Activated T-helper 2 cell treated with anti-CD3 and anti-CD28 coated beads, Interferon-gamma antibody, Interleukin-2, Interleukin-4, amounts not matched to agents 10 μg/mL and 5 μg/mL and 100 μg/mL, durations not matched to agents 14 hours and 24 hours and 36 hours (primary cell): ENCODE measurements at regions of chr2 and their contacts with region 1.

Region 1: GRCh38 chr2:130372055-130372832 is 16.4 kb downstream of the PTPN18 start:
- DNase-seq: peak; percentile 69
- H3K4me3 Mint-ChIP-seq: peak overlapping the region; percentile 92
- H3K27ac Mint-ChIP-seq: peak overlapping the region; percentile 89
- H3K4me1 Mint-ChIP-seq: peaks cover 51% of the 10 kb centered on the region
- H3K27me3 Mint-ChIP-seq: peaks cover 1% of the 10 kb centered on the region

Region 2: GRCh38 chr2:130252880-130253645 is 119.2 kb before region 1 on chr2:
- intact Hi-C with region 1: no loop called
- DNase-seq: no peak
- H3K4me3 Mint-ChIP-seq: no peak overlapping the region
- H3K27ac Mint-ChIP-seq: no peak overlapping the region
- H3K4me1 Mint-ChIP-seq: no peaks in the 10 kb centered on the region
- H3K27me3 Mint-ChIP-seq: peaks cover 26% of the 10 kb centered on the region

Region 3: DNA sequence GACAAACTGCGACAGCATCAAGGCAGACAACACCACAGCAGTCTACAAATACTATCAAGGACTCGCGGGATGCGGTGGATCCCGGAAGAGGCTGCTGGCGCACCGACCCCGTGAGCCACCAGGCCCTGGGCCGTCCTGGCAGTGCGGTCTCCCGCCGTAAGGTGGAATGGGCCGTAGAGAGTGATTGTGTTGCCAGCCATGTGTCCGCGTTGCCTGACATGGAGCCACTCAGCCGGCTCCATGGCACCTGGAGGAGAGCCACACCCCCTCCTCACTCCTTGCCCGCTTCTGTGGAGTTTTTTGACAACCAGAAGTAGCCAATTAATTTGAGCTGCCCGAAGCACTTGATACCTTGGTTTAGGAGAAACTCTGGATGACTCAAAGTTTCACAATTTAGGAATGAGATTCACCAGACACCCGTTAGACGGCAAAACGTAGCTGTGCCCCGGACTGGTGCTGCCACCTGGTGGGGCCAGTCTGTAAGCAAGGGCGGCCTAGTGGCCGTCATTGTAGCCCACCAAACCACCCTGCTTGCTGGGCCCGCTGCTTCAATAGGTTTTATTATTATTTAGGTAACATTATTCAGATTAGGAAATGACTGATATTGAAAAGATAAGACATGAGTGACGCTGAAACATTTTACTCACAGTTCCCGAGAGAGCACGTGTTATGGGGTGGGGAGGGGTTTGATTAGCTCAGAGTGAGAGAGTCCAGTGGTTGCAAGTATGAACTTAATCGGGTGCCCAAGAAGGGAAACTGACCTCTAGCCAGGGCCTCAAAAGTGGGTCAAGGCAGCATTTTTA is 39.8 kb before region 1 on chr2:
- intact Hi-C with region 1: no loop called
- DNase-seq: peak; percentile 45
- H3K4me3 Mint-ChIP-seq: no peak overlapping the region
- H3K27ac Mint-ChIP-seq: no peak overlapping the region
- H3K4me1 Mint-ChIP-seq: peaks cover 5% of the 10 kb centered on the region
- H3K27me3 Mint-ChIP-seq: peaks cover 36% of the 10 kb centered on the region

Region 4: GRCh38 chr2:130355578-130356431 is 16.4 kb before region 1 on chr2 and contains the start of gene PTPN18:
- intact Hi-C with region 1: loop called (anchors 2 kb)
- DNase-seq: peak; percentile 55
- H3K4me3 Mint-ChIP-seq: peak within 1 kb of the TSS; percentile 81
- H3K27ac Mint-ChIP-seq: no peak within 1 kb of the TSS
- H3K4me1 Mint-ChIP-seq: peaks cover 13% of the 10 kb centered on the region
- H3K27me3 Mint-ChIP-seq: peaks cover 2% of the 10 kb centered on the region
- total RNA-seq, gene PTPN18: 72.6 and 72.9 TPM in 2 replicates

Region 5: DNA sequence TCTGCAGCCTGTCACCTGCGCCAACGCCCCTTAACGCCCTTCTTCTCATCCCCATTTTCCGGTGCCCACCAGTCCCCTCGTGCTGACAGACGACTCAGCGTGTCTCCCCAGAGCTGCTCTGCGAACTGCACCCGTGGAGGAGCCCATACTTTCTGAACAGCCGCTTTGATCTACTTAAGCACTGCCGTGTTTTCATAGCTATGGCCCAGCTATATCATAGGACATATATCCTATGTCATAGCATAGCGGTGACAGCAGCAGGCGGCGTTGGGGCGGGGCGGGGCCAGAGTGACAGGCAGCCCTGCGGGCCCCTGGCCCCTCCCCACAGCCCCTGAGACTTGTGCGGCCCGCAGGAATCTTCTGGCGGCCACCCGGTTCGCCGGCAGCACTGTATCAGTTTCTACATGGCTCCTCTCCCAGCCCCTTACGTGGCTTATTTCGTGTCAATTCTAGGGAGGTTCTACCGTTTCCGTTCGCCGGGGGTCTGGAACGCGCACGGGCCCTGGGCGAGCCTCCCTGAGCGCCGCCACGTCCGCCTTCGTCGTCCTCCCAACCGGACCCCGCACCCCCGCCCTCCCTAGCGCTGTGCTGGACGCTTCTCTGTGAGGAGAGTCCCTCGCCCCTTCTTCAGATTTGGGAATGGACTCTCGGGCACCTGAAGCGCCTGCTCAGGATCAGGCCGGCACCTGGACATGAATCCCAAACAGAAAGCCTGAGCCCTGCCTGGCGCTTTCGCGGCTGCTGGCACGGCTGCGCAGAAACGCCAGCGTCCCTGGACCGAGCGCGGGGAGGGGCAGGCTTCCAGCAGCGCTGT is 19.0 kb after region 1 on chr2:
- intact Hi-C with region 1: loop called (anchors 2 kb)
- DNase-seq: peak; percentile 59
- H3K4me3 Mint-ChIP-seq: peak overlapping the region; percentile 83
- H3K27ac Mint-ChIP-seq: peak overlapping the region; percentile 86
- H3K4me1 Mint-ChIP-seq: peaks cover 11% of the 10 kb centered on the region
- H3K27me3 Mint-ChIP-seq: peaks cover 5% of the 10 kb centered on the region

Region 6: DNA sequence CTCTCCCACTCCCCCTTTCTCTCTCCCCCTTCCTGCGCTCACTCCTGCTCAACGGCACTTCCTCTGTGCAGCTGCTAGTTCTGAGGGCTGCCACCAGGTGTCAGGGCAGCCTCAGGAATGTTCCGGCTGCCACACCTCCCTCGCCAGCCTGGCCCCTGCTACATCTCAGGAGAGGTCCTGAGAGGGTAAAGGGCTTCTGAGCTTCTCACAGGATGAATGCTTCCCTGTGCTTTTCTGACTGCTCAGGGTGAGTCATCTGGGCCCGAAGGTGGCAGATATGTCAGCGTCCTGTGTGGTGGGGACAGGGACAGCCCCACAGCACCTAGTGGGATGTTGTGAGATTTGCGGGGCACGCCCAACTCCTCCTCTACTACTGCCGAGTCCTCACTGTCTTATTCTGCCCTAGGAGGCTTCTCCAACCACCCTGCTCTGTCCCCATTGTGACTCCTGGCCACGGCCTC is 781.9 kb after region 1 on chr2:
- intact Hi-C with region 1: no loop called
- DNase-seq: peak; percentile 50
- H3K4me3 Mint-ChIP-seq: no peak overlapping the region
- H3K27ac Mint-ChIP-seq: no peak overlapping the region
- H3K4me1 Mint-ChIP-seq: peaks cover 21% of the 10 kb centered on the region
- H3K27me3 Mint-ChIP-seq: peaks cover 5% of the 10 kb centered on the region